AG04449 (cell line): ENCODE measurements at regions of chr3 and their contacts with region 1.

Region 1: GRCh38 chr3:197906023-197906849 is 43.8 kb upstream of the RPL35A start:
- DNase-seq: peak; percentile 80
- H3K4me3 ChIP-seq: no peak overlapping the region
- CTCF ChIP-seq: peak; percentile 96

Region 2: DNA sequence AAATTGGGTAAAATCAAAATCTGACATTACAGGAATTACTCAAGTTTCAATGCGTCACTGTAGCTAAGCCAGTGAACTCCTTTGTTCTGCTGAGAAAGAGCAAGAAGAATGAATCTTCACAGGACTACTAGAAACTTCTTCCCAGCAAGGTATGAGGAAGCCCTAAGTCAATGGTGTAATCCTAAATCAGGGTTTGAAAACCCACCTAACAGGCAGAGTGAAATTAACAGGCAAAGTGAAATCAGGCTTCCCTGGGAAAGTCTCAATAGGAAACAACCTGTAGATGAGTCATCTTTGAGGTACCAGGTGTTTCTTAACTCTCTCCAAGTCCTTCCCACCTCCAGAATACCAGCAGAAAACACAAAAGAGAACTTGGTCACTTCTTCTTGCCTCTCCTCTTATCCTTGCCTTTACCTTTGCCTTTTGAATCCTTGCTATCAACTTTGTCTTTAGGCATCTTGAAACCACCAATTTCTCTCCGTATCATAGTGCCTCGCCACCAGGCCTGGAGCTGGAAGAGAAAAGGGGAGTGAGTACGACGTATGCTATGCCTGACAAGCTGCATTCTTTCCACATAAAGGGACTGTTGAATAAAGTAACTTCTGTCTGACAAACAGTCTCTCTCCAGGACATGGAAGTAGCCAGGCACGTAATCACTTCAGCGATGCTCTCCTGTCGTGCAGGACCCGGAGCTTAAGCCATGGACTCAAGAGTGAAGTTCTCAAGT is 16.9 kb before region 1 on chr3:
- CTCF ChIA-PET with region 1: interaction called, 34 read pairs
- POLR2A ChIA-PET with region 1: no interaction called
- DNase-seq: no peak
- H3K4me3 ChIP-seq: no peak overlapping the region
- CTCF ChIP-seq: no peak

Region 3: DNA sequence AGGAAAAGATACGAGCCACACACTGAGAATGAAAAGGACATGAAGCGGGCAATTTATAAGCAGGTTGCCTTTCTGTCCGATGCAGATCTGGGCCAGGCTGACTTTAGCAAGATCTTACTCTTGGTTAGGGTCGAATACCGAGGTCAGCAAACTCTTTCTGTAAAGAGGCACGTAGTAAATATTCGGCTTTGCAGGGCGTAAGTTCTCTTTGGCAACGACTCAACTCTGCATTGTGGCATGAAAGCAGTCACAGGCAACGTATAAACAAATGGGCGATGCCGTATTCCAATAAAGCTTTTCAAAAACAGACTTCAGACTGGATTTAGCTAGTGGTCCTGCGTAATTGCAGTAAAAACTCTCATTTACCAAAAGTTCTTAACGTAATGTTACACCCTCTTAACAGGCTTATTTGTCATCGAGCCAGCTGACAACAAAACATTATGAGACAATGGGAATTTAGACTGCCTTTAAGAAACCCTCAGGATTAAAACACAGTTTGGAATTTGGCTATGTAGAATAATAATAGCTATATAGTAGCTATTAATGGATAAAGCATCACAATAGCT is 30.7 kb after region 1 on chr3:
- CTCF ChIA-PET with region 1: interaction called, 143 read pairs
- POLR2A ChIA-PET with region 1: no interaction called
- DNase-seq: no peak
- H3K4me3 ChIP-seq: no peak overlapping the region
- CTCF ChIP-seq: no peak

Region 4: GRCh38 chr3:197949754-197950660 is 43.8 kb after region 1 on chr3 and contains the start of gene RPL35A:
- CTCF ChIA-PET with region 1: interaction called, 143 read pairs
- POLR2A ChIA-PET with region 1: no interaction called
- DNase-seq: peak; percentile 63
- H3K4me3 ChIP-seq: peak within 1 kb of the TSS; percentile 81
- CTCF ChIP-seq: no peak